ENCODE measurements at regions of chr15 and their contacts with region 1.

Region 1: DNA sequence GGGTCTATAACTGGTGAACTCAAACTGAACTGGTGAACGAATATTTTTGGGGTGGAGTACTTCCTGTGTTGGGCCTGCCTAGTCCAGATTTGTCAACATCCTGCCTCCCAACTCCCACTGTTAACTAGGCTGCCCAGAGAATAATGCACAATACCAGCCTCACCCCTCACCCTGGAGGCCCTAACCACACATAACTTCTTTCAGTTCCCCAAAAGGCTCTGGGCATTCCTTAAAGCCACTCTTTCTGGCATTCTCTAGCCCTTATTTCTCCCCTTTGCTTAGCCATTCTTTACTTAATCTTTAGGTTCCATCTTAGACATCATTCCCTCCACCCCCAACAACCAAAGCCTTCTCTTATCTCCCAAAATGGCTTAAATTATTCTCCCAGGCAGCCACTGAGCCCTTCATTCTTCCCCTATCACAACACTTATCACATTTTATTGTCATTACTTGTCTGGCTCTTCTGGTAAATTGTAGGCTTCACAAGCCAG is 9.1 kb upstream of the SEC11A start:
- DNase-seq: peak; percentile 51
- ATAC-seq: peak; percentile 73
- H3K4me3 Mint-ChIP-seq: peak overlapping the region; percentile 42
- H3K27ac Mint-ChIP-seq: peak overlapping the region; percentile 90
- H3K4me1 Mint-ChIP-seq: peaks cover 36% of the 10 kb centered on the region
- H3K27me3 Mint-ChIP-seq: no peaks in the 10 kb centered on the region

Region 2: GRCh38 chr15:85430406-85431204 is 705.6 kb after region 1 on chr15:
- CTCF ChIA-PET with region 1: no interaction called
- POLR2A ChIA-PET with region 1: interaction called, 11 read pairs
- DNase-seq: no peak
- ATAC-seq: no peak
- H3K4me3 Mint-ChIP-seq: no peak overlapping the region
- H3K27ac Mint-ChIP-seq: no peak overlapping the region
- H3K4me1 Mint-ChIP-seq: peaks cover 18% of the 10 kb centered on the region
- H3K27me3 Mint-ChIP-seq: no peaks in the 10 kb centered on the region

Measured in activated CD8-positive, alpha-beta T cell treated with anti-CD3 and anti-CD28 coated beads, Interleukin-2, amount 10 ng/mL, durations not matched to agents 7 days and 5 days (primary cell).